ENCODE measurements at regions of chr20 and their contacts with region 1.

Region 1: DNA sequence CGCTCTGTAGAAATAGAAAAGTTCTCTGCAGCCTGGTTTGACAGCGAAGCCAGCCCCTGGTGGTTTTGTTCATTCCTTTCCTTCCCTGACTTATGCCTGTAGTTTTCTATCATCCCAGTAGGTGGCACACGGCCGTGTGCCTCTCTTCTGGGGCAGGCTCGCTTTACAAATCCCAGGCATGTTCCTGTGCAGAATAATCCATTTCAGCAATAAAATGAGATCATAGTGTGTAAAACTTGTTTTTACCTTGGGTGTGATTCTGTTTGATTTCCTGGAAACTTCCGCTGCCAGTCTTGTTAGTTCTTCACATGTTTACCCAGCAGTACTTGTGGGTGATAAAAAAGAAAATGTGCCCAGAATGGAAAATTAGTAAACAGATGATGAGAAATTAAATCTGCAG is 7.4 kb upstream of the INSM1 start:
- DNase-seq: peak in 1 of 2 experiments; percentile 56
- H3K4me3 ChIP-seq: no peak overlapping the region
- H3K4me3 Mint-ChIP-seq: no peak overlapping the region
- H3K27ac Mint-ChIP-seq: no peak overlapping the region
- H3K4me1 ChIP-seq: peaks cover 5% of the 10 kb centered on the region; the same call in 1 of the 2 replicates
- H3K4me1 Mint-ChIP-seq: peaks cover 12% of the 10 kb centered on the region
- H3K27me3 ChIP-seq: no peaks in the 10 kb centered on the region; the same call in 1 of the 2 replicates
- H3K27me3 Mint-ChIP-seq: peaks cover 33% of the 10 kb centered on the region
- CTCF ChIP-seq: peak; percentile 89 to 90

Region 2: GRCh38 chr20:20083807-20084206 is 276.7 kb before region 1 on chr20:
- CTCF ChIA-PET with region 1: no interaction called
- POLR2A ChIA-PET with region 1: no interaction called
- intact Hi-C with region 1: loop called (anchors 2 kb)
- DNase-seq: peak in 1 of 2 experiments; percentile 23
- H3K4me3 ChIP-seq: no peak overlapping the region
- H3K4me3 Mint-ChIP-seq: no peak overlapping the region
- H3K27ac Mint-ChIP-seq: no peak overlapping the region
- H3K4me1 ChIP-seq: no peaks in the 10 kb centered on the region
- H3K4me1 Mint-ChIP-seq: peaks cover 6% of the 10 kb centered on the region
- H3K27me3 ChIP-seq: no peaks in the 10 kb centered on the region
- H3K27me3 Mint-ChIP-seq: peaks cover 3% of the 10 kb centered on the region
- CTCF ChIP-seq: peak; percentile 37 to 64

Region 3: DNA sequence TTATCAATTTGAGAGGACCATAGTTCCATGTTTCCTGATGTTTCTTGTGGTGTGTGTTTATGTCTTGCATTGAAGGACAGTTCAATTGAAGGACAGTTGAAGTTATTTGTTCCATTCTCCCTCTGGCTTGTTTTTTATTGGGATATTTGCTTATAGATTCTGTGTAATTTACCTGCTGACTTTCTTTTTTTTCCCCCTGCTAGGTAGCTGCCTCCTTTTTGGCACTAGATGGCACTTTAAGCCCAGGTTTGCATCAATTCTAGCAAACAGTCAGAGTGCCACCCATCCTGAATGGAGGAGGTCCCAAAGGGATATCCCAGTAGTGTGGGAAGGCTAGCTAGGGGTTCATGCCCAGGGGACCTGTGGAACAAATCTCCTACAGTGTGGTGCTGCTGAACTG is 230.1 kb before region 1 on chr20:
- CTCF ChIA-PET with region 1: no interaction called
- POLR2A ChIA-PET with region 1: no interaction called
- intact Hi-C with region 1: loop called (anchors 10 kb)
- DNase-seq: peak in 1 of 2 experiments; percentile 28
- H3K4me3 ChIP-seq: no peak overlapping the region
- H3K4me3 Mint-ChIP-seq: no peak overlapping the region
- H3K27ac Mint-ChIP-seq: no peak overlapping the region
- H3K4me1 ChIP-seq: peaks cover 7% of the 10 kb centered on the region
- H3K4me1 Mint-ChIP-seq: no peaks in the 10 kb centered on the region
- H3K27me3 ChIP-seq: no peaks in the 10 kb centered on the region
- H3K27me3 Mint-ChIP-seq: no peaks in the 10 kb centered on the region
- CTCF ChIP-seq: peak; percentile 16 to 28

Region 4: DNA sequence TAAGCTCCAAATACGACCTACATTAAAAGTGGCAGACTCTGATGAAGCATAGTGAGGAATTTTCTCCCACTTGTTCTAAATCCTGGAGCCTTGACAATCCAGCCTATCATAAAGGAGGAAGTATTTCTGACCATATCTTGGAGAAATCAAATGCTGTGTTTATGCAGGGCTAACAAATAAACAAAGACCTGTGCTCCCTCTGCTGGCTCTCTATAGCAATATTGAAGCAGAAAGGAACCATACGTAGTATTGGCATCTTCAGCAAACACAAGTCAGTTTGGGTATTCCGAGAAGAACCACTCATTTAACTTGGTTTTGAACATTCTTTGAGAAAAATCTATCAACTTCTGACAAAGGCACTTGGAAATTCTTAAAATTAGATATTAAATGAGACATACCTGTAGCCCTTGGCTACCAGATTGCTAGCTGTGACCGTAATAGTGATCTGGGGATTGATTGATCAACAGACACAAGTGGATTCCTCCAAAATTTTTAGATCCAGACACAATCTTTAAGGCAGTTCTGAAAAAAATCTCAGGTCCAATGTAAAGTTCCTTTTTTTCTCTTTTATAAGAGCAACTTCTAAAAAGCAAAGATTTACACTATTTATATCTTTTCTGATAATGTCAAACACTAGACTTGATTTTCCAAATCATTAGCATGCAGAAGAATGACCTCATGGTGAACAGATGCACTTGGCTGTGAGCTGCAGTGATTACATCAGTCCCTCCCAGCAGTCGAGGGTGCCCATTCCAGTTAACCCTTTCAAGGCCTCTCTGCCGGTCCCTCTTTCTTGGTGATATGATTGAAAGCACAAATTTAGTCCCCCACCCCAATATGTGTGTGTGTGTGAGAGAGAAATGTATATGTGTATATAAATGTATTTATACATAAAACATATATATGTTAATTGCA is 47.7 kb after region 1 on chr20:
- CTCF ChIA-PET with region 1: no interaction called
- POLR2A ChIA-PET with region 1: no interaction called
- intact Hi-C with region 1: loop called (anchors 5 kb)
- DNase-seq: no peak
- H3K4me3 ChIP-seq: no peak overlapping the region
- H3K4me3 Mint-ChIP-seq: no peak overlapping the region
- H3K27ac Mint-ChIP-seq: no peak overlapping the region
- H3K4me1 ChIP-seq: no peaks in the 10 kb centered on the region
- H3K4me1 Mint-ChIP-seq: no peaks in the 10 kb centered on the region
- H3K27me3 ChIP-seq: no peaks in the 10 kb centered on the region
- H3K27me3 Mint-ChIP-seq: no peaks in the 10 kb centered on the region
- CTCF ChIP-seq: peak in 1 of 2 experiments; percentile 37

Region 5: DNA sequence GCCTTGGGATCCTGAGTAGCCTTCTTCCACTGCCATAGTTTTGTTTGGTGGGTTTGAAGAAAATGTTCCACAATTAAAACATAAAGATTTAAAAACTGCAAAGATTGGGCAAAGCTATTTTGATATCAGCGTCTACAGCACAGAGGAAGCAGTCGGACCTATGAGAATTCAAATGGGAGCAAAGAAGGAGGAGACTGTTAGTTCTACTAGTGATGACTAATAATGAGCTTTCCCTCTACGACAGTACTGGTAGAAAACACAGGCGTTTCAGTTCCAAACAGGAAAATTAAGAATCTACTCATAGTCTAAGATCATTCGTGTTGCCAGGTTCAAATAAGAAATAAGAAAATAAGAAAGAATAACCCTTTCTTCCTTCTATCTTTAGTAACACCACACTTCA is 128.6 kb after region 1 on chr20:
- CTCF ChIA-PET with region 1: no interaction called
- POLR2A ChIA-PET with region 1: no interaction called
- intact Hi-C with region 1: loop called (anchors 10 kb)
- DNase-seq: no peak
- H3K4me3 ChIP-seq: no peak overlapping the region
- H3K4me3 Mint-ChIP-seq: no peak overlapping the region
- H3K27ac Mint-ChIP-seq: no peak overlapping the region
- H3K4me1 ChIP-seq: no peaks in the 10 kb centered on the region
- H3K4me1 Mint-ChIP-seq: no peaks in the 10 kb centered on the region
- H3K27me3 ChIP-seq: no peaks in the 10 kb centered on the region
- H3K27me3 Mint-ChIP-seq: no peaks in the 10 kb centered on the region
- CTCF ChIP-seq: no peak

Region 6: DNA sequence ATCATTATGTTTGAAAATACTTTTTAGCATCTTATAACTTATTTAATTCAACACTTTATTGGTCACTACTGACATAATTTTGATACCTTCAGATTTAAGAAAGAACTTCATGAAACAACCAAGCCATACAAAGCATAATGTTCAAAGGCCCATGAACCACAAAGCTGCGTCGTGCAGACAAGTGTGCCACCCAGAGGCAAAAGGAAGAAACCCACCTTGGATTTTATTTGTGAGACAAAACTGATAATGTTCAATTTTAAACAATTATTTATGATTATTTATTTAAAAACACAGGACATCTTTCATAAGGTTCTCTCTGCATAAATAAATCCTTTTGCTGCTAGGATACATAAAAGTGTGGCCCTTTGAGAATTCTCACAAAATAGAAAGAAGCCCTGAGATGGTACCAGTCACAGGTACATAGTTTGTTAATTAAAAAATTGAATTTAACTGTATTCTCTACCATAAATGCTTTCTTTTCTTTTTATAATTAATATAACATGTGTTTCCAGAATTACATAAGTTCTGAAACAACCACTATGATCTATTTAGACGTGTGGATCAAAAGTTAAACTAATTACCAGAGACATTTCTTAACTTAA is 208.2 kb after region 1 on chr20:
- CTCF ChIA-PET with region 1: no interaction called
- POLR2A ChIA-PET with region 1: no interaction called
- intact Hi-C with region 1: loop called (anchors 1 kb)
- DNase-seq: peak in 1 of 2 experiments; percentile 43
- H3K4me3 ChIP-seq: no peak overlapping the region
- H3K4me3 Mint-ChIP-seq: no peak overlapping the region
- H3K27ac Mint-ChIP-seq: no peak overlapping the region
- H3K4me1 ChIP-seq: peaks cover 18% of the 10 kb centered on the region
- H3K4me1 Mint-ChIP-seq: no peaks in the 10 kb centered on the region
- H3K27me3 ChIP-seq: no peaks in the 10 kb centered on the region
- H3K27me3 Mint-ChIP-seq: no peaks in the 10 kb centered on the region
- CTCF ChIP-seq: peak; percentile 79 to 80

Region 7: GRCh38 chr20:20593447-20594170 is 233.1 kb after region 1 on chr20:
- CTCF ChIA-PET with region 1: no interaction called
- POLR2A ChIA-PET with region 1: no interaction called
- intact Hi-C with region 1: loop called (anchors 5 kb)
- DNase-seq: peak; percentile 53 to 61
- H3K4me3 ChIP-seq: no peak overlapping the region
- H3K4me3 Mint-ChIP-seq: no peak overlapping the region
- H3K27ac Mint-ChIP-seq: no peak overlapping the region
- H3K4me1 ChIP-seq: no peaks in the 10 kb centered on the region
- H3K4me1 Mint-ChIP-seq: no peaks in the 10 kb centered on the region
- H3K27me3 ChIP-seq: no peaks in the 10 kb centered on the region
- H3K27me3 Mint-ChIP-seq: no peaks in the 10 kb centered on the region
- CTCF ChIP-seq: peak; percentile 58 to 66

Measured in Caco-2 (cell line).